Colonic mucosa (tissue), 4 donors: ENCODE measurements at regions of chr3 and their contacts with region 1.

Region 1: GRCh38 chr3:142987080-142987700 is 14.2 kb upstream of the U2SURP start:
- DNase-seq: no peak
- H3K4me3 ChIP-seq: no peak overlapping the region
- H3K27ac ChIP-seq: no peak overlapping the region
- H3K4me1 ChIP-seq: no peaks in the 10 kb centered on the region
- H3K27me3 ChIP-seq: no peaks in the 10 kb centered on the region
- CTCF ChIP-seq: peak; percentile 57

Region 2: DNA sequence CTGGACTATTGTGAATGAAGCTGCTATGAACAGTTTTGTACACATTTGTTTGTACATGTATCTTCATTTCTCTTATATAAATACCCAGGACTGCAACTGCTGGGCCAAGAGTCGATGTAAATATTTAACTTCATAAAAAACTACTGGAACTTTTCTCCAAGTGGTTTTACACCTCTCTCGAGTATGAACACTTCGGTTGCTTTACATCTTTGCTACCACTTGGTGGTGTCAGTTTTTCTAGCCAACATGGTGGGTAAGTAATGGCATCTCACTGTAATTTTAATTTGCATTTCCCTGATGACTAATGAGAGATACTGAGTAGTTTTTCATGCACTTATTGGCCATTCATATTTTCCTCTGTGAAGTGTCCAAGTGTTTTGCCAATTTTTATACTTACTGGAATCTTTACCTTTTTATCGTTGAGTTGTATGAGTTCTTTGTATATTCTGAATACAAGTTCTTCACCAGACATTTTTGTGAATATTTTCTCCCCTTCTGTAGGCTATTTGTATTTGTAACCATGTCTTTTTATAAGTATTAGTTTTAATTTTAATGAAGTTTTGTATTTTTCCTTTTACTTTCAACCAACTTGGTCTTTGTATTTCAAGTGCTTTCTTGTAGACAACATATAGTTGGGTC is 142.7 kb before region 1 on chr3:
- intact Hi-C with region 1: loop called (anchors 5 kb)
- DNase-seq: no peak
- H3K4me3 ChIP-seq: no peak overlapping the region
- H3K27ac ChIP-seq: no peak overlapping the region
- H3K4me1 ChIP-seq: no peaks in the 10 kb centered on the region
- H3K27me3 ChIP-seq: no peaks in the 10 kb centered on the region
- CTCF ChIP-seq: peak; percentile 48

Region 3: GRCh38 chr3:142931222-142931621 is 56.0 kb before region 1 on chr3:
- intact Hi-C with region 1: loop called (anchors 10 kb)
- DNase-seq: no peak
- H3K4me3 ChIP-seq: no peak overlapping the region
- H3K27ac ChIP-seq: no peak overlapping the region
- H3K4me1 ChIP-seq: no peaks in the 10 kb centered on the region
- H3K27me3 ChIP-seq: no peaks in the 10 kb centered on the region
- CTCF ChIP-seq: no peak

Region 4: DNA sequence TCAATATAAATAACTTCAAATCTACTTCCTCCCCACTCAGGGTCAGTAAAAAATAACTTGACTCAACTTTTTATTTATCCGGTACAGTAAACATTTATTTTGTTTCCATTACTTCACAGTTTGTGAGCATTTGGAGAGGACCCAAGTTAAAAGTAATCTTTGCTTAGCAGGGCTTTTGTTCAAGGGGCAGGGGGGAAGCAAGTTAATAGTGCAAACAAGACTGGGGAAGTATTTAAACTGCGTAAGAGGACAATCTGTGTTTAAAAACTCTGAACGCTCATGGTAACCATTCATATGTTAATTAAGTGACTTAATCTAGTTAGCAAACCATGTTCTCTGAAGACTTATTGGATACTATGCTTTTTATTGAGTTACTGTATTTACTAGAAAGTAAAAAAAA is 514.9 kb after region 1 on chr3:
- intact Hi-C with region 1: no loop called
- DNase-seq: no peak
- H3K4me3 ChIP-seq: no peak overlapping the region
- H3K27ac ChIP-seq: no peak overlapping the region
- H3K4me1 ChIP-seq: no peaks in the 10 kb centered on the region
- H3K27me3 ChIP-seq: no peaks in the 10 kb centered on the region
- CTCF ChIP-seq: no peak